CD4-positive, alpha-beta memory T cell (primary cell): ENCODE measurements at regions of chr20 and their contacts with region 1.

Region 1: DNA sequence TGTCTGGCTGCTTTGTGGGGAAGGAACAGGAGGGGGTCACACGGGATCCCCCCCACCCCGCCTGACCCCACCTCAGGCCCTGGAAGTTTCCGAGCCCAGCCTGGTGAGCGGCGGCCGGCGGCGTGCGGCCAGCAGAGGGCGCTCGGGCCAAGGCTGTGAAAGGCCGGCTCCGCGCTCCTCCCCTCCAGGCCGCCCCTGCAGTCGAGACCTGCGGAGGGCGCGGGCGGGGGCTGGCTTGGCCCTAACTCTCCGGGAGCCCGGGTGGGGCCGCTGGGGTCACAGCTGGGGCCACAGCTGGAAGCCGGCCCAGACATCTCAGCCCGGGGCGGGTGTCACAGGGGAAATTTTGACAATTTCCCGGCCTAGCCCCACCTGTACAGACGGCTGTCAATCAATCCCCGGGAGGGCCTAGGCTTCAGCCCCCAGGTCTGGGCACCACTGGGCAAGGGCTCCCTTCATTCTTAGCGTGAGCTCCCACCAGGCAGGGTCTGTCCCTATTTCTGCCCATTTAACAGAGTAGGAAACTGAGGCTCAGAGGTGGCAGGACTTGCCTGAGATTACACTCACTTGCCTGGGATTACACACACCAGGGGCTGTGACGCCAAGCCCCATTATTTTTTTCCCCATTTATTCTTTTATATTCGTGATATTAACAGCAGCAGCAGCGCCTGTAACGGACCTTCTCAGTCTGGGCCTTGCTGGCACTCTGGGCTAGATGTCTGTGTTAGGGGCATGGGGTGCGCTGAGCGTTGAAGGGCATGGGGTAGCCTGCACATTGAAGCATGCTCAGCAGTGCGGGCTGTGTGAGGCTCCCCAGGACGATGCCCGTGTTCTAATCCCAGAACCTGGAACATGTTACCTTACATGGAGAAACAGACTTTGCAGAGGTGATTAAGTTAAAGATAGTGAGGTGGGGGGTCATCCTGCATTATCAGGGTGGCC is 23.0 kb downstream of the ZBP1 start:
- DNase-seq: peak; percentile 61 to 75 (median 70)
- H3K4me3 ChIP-seq: no peak overlapping the region
- H3K4me3 Mint-ChIP-seq: peak overlapping the region in 2 of 8 donors; percentile 16 to 36
- H3K27ac ChIP-seq: no peak overlapping the region
- H3K27ac Mint-ChIP-seq: peak overlapping the region in 1 of 7 donors; percentile 29
- H3K4me1 ChIP-seq: peaks cover 3% of the 10 kb centered on the region
- H3K4me1 Mint-ChIP-seq: peaks cover 0 to 8% (median 5%) of the 10 kb centered on the region in 4 donors
- H3K27me3 ChIP-seq: no peaks in the 10 kb centered on the region
- H3K27me3 Mint-ChIP-seq: peaks cover 3 to 4% of the 10 kb centered on the region in 2 donors

Region 2: GRCh38 chr20:56551571-56551970 is 1045.7 kb before region 1 on chr20:
- CTCF ChIA-PET with region 1: interaction called, 20 read pairs
- POLR2A ChIA-PET with region 1: no interaction called
- intact Hi-C with region 1: no loop called
- DNase-seq: no peak
- H3K4me3 ChIP-seq: no peak overlapping the region
- H3K4me3 Mint-ChIP-seq: no peak overlapping the region
- H3K27ac ChIP-seq: no peak overlapping the region
- H3K27ac Mint-ChIP-seq: peak overlapping the region in 1 of 7 donors; percentile 53
- H3K4me1 ChIP-seq: no peaks in the 10 kb centered on the region
- H3K4me1 Mint-ChIP-seq: no peaks in the 10 kb centered on the region
- H3K27me3 ChIP-seq: no peaks in the 10 kb centered on the region
- H3K27me3 Mint-ChIP-seq: peaks cover 0 to 1% of the 10 kb centered on the region in 2 donors

Region 3: DNA sequence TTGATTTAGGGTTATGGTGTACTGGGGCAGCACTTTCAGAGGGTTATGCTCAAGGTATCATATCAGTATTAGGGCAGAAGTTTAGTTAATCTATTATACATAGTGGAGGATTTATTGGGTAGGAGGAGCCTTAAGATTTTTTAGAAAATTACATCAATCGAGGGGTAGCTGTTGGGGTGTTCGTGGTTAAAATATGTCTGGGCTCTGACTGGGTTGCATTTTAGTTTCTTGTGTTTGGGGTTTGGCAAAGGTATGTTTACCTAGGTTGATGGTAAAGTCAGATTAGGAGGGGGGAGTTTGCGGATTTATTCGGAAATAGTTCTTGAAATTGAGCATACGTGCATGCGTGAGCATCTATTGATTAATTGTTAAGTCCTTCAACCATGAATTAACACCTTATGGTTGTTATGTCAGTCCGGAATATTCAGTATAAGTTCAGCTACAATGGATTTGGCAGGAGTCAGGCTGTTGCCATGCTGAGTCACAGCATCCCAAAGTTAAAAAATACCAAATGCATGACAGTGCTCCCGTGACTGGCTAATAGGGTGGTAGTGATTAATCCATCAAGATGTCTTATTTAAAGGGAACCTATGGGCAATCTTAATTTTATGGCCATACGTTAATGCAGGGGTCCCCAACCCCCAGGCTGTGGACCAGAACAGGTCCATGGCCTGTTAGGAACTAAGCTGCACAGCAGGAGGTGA is 235.9 kb before region 1 on chr20:
- CTCF ChIA-PET with region 1: no interaction called
- POLR2A ChIA-PET with region 1: no interaction called
- intact Hi-C with region 1: no loop called
- DNase-seq: no peak
- H3K4me3 ChIP-seq: no peak overlapping the region
- H3K4me3 Mint-ChIP-seq: no peak overlapping the region
- H3K27ac ChIP-seq: no peak overlapping the region
- H3K27ac Mint-ChIP-seq: peak overlapping the region in 2 of 7 donors; percentile 11 to 47
- H3K4me1 ChIP-seq: no peaks in the 10 kb centered on the region
- H3K4me1 Mint-ChIP-seq: peaks cover 0 to 5% (median 2%) of the 10 kb centered on the region in 4 donors
- H3K27me3 ChIP-seq: no peaks in the 10 kb centered on the region
- H3K27me3 Mint-ChIP-seq: no peaks in the 10 kb centered on the region

Region 4: GRCh38 chr20:57628047-57628961 is 31.0 kb after region 1 on chr20:
- CTCF ChIA-PET with region 1: interaction called, 111 read pairs
- POLR2A ChIA-PET with region 1: interaction called, 7 read pairs
- intact Hi-C with region 1: no loop called
- DNase-seq: peak; percentile 61 to 88 (median 67)
- H3K4me3 ChIP-seq: peak overlapping the region in 1 of 2 donors; percentile 18
- H3K4me3 Mint-ChIP-seq: peak overlapping the region; percentile 80 to 92 (median 83)
- H3K27ac ChIP-seq: peak overlapping the region; percentile 71
- H3K27ac Mint-ChIP-seq: peak overlapping the region; percentile 89 to 99 (median 98)
- H3K4me1 ChIP-seq: peaks cover 67% of the 10 kb centered on the region
- H3K4me1 Mint-ChIP-seq: peaks cover 36 to 87% (median 61%) of the 10 kb centered on the region in 4 donors
- H3K27me3 ChIP-seq: peaks cover 6% of the 10 kb centered on the region
- H3K27me3 Mint-ChIP-seq: peaks cover 0 to 5% of the 10 kb centered on the region in 2 donors

Region 5: GRCh38 chr20:57669626-57670025 is 72.4 kb after region 1 on chr20:
- CTCF ChIA-PET with region 1: no interaction called
- POLR2A ChIA-PET with region 1: no interaction called
- intact Hi-C with region 1: loop called (anchors 1 kb)
- DNase-seq: no peak
- H3K4me3 ChIP-seq: no peak overlapping the region
- H3K4me3 Mint-ChIP-seq: no peak overlapping the region
- H3K27ac ChIP-seq: no peak overlapping the region
- H3K27ac Mint-ChIP-seq: no peak overlapping the region
- H3K4me1 ChIP-seq: no peaks in the 10 kb centered on the region
- H3K4me1 Mint-ChIP-seq: no peaks in the 10 kb centered on the region
- H3K27me3 ChIP-seq: no peaks in the 10 kb centered on the region
- H3K27me3 Mint-ChIP-seq: no peaks in the 10 kb centered on the region

Region 6: DNA sequence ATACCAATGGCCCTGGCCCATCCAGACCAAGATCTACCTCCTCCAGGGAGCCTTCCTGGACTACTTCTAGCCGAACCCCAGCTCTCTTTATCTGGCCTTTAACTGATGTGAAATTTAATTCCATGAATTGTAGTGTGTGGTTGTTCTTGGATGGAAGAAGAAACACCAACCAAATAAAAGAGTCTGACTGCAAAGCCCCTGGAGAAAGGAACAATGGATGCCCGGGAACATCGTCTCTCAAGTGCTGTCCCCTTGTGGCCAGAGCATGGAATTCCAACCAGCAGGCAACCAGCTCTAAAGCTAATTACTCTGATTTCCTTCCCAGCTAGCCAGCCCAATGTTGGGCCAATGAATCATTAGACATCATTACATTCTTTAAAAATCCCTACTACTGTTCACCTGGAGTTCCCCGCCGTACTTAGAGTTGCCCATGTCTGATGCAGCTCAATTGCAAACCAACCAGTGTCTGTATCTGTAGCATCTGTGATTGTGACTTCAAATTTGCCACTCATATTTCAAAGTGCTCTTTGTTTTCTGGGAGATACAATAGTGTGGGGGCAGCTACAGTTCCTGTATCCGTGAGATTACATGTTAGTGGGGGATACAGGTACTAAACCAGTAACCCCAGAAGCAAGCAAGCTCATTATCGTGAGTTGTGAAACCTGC is 490.1 kb after region 1 on chr20:
- CTCF ChIA-PET with region 1: interaction called, 12 read pairs
- POLR2A ChIA-PET with region 1: no interaction called
- intact Hi-C with region 1: loop called (anchors 10 kb)
- DNase-seq: peak in 1 of 5 donors; percentile 4
- H3K4me3 ChIP-seq: no peak overlapping the region
- H3K4me3 Mint-ChIP-seq: no peak overlapping the region
- H3K27ac ChIP-seq: no peak overlapping the region
- H3K27ac Mint-ChIP-seq: no peak overlapping the region
- H3K4me1 ChIP-seq: no peaks in the 10 kb centered on the region
- H3K4me1 Mint-ChIP-seq: no peaks in the 10 kb centered on the region
- H3K27me3 ChIP-seq: no peaks in the 10 kb centered on the region
- H3K27me3 Mint-ChIP-seq: peaks cover 0 to 14% of the 10 kb centered on the region in 2 donors

Region 7: DNA sequence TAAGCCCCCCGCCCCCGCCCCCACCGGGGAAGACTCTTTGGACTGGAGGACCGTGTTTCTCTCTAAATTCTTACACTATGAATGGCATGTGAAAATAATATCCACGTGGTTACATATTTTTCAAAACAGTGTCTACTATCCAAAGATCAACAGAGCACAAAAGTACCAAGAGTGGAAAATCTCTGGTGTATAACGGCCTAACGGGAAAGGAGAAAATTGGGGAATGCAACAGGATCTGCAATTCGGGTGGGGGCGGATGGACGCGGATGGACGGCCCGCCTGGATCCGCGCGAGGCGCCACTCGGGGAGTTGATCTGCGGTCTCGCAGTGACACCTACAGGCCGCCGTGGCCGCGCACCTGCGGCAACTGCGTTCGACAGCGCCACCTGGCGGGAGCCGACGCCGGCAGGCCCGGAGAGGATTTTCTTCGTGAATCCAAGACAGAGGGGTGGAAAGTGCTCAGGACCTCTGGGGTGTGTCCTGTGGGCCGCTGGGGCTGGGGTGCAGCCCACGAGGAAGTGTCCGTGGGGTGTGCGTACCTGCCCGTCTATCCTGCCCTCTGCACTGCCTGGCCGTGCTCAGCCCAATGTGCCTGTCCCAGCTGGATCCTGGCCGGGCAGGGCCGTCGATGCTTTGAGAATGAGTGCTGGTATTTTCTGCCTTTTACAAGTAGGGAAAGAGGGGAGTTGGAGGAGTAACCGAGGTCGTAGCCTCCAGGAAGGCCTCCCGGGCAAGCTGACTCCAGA is 612.6 kb after region 1 on chr20:
- CTCF ChIA-PET with region 1: interaction called, 73 read pairs
- POLR2A ChIA-PET with region 1: no interaction called
- intact Hi-C with region 1: loop called (anchors 1 kb)
- DNase-seq: peak; percentile 78 to 83 (median 80)
- H3K4me3 ChIP-seq: no peak overlapping the region
- H3K4me3 Mint-ChIP-seq: peak overlapping the region in 4 of 8 donors; percentile 1 to 70 (median 17)
- H3K27ac ChIP-seq: no peak overlapping the region
- H3K27ac Mint-ChIP-seq: peak overlapping the region; percentile 33 to 81 (median 58)
- H3K4me1 ChIP-seq: no peaks in the 10 kb centered on the region
- H3K4me1 Mint-ChIP-seq: peaks cover 0 to 4% (median 2%) of the 10 kb centered on the region in 4 donors
- H3K27me3 ChIP-seq: no peaks in the 10 kb centered on the region
- H3K27me3 Mint-ChIP-seq: peaks cover 3 to 12% of the 10 kb centered on the region in 2 donors

Region 8: GRCh38 chr20:58223358-58223941 is 626.2 kb after region 1 on chr20:
- CTCF ChIA-PET with region 1: no interaction called
- POLR2A ChIA-PET with region 1: no interaction called
- intact Hi-C with region 1: no loop called
- DNase-seq: no peak
- H3K4me3 ChIP-seq: no peak overlapping the region
- H3K4me3 Mint-ChIP-seq: no peak overlapping the region
- H3K27ac ChIP-seq: no peak overlapping the region
- H3K27ac Mint-ChIP-seq: no peak overlapping the region
- H3K4me1 ChIP-seq: no peaks in the 10 kb centered on the region
- H3K4me1 Mint-ChIP-seq: peaks cover 1 to 12% (median 4%) of the 10 kb centered on the region in 4 donors
- H3K27me3 ChIP-seq: peaks cover 19% of the 10 kb centered on the region
- H3K27me3 Mint-ChIP-seq: peaks cover 48 to 69% of the 10 kb centered on the region in 2 donors